ENCODE measurements at regions of chr17 and their contacts with region 1.

Region 1: GRCh38 chr17:31269578-31269983 is 27.5 kb downstream of the OMG start:
- DNase-seq: peak; percentile 53 to 62
- H3K4me3 ChIP-seq: no peak overlapping the region
- H3K4me3 Mint-ChIP-seq: no peak overlapping the region
- H3K27ac Mint-ChIP-seq: peak overlapping the region; percentile 51
- H3K4me1 ChIP-seq: peaks cover 15% of the 10 kb centered on the region
- H3K4me1 Mint-ChIP-seq: peaks cover 12% of the 10 kb centered on the region
- H3K27me3 ChIP-seq: no peaks in the 10 kb centered on the region
- H3K27me3 Mint-ChIP-seq: no peaks in the 10 kb centered on the region
- CTCF ChIP-seq: no peak

Region 2: DNA sequence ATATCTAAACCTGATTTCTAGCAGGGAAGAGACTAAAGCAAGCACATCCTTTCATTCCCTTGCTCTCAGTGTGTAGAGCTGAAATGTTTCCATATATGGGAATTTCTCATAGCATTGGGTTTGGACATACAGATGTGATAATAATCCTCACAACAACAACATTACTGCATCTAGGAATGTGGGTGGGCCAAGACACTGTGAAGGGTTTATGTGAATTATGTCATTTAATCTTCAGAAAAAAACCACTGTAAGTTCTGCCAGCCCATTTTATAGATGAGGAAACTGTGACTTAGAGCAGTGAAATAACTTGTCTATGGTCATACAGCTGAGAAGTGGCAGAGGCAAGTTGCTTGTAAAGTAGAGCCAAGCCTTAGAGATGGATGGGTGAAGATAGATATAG is 22.2 kb after region 1 on chr17:
- CTCF ChIA-PET with region 1: no interaction called
- POLR2A ChIA-PET with region 1: no interaction called
- intact Hi-C with region 1: loop called (anchors 2 kb)
- DNase-seq: no peak
- H3K4me3 ChIP-seq: no peak overlapping the region
- H3K4me3 Mint-ChIP-seq: no peak overlapping the region
- H3K27ac Mint-ChIP-seq: no peak overlapping the region
- H3K4me1 ChIP-seq: no peaks in the 10 kb centered on the region
- H3K4me1 Mint-ChIP-seq: no peaks in the 10 kb centered on the region
- H3K27me3 ChIP-seq: no peaks in the 10 kb centered on the region
- H3K27me3 Mint-ChIP-seq: no peaks in the 10 kb centered on the region
- CTCF ChIP-seq: no peak

Measured in Caco-2 (cell line).